ENCODE measurements at regions of chr14 and their contacts with region 1.

Region 1: GRCh38 chr14:72023722-72024407 is 91.6 kb downstream of the RGS6 start:
- DNase-seq: peak; percentile 28
- H3K4me3 ChIP-seq: no peak overlapping the region
- H3K27ac ChIP-seq: no peak overlapping the region
- H3K4me1 ChIP-seq: no peaks in the 10 kb centered on the region
- H3K27me3 ChIP-seq: no peaks in the 10 kb centered on the region
- CTCF ChIP-seq: peak; percentile 62

Region 2: GRCh38 chr14:71815110-71815509 is 208.8 kb before region 1 on chr14:
- intact Hi-C with region 1: no loop called
- DNase-seq: no peak
- H3K4me3 ChIP-seq: no peak overlapping the region
- H3K27ac ChIP-seq: no peak overlapping the region
- H3K4me1 ChIP-seq: no peaks in the 10 kb centered on the region
- H3K27me3 ChIP-seq: no peaks in the 10 kb centered on the region
- CTCF ChIP-seq: no peak

Region 3: GRCh38 chr14:72420725-72421474 is 397.0 kb after region 1 on chr14:
- intact Hi-C with region 1: loop called (anchors 5 kb)
- DNase-seq: peak; percentile 80
- H3K4me3 ChIP-seq: no peak overlapping the region
- H3K27ac ChIP-seq: no peak overlapping the region
- H3K4me1 ChIP-seq: no peaks in the 10 kb centered on the region
- H3K27me3 ChIP-seq: no peaks in the 10 kb centered on the region
- CTCF ChIP-seq: peak; percentile 91

Measured in colonic mucosa (tissue), 4 donors.